ENCODE measurements at regions of chr3 and their contacts with region 1.

Region 1: DNA sequence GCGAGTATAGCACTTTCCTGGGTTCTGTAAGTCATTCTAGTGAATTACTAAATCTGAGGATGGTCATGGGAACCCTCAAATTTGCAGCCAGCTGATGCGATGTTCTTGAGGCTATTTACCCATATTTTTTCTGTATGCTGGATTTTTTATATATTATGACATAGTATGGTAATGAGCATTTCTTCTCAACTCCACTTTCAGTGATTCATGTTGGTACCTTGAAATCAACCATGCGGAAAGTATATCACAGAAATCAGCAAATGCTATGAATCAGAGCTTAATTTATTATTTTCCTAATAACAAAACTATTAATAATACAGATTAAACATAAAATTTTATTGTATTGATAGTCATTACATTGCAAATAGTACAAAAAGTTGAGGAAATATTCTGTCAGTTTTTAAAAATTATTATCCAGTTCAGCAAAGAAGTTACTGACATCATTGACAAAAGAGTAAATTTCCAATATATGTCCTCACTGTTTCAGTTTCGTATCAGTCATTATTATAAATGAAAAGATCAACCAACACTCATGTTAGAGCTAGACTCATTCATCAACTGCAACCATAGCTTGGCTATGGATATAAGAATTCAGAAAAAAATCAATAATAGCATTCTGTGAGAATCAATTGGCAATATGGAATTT is 164.3 kb upstream of the SETMAR start:
- DNase-seq: no peak
- H3K4me3 ChIP-seq: no peak overlapping the region
- H3K27ac ChIP-seq: no peak overlapping the region
- H3K4me1 ChIP-seq: no peaks in the 10 kb centered on the region
- H3K27me3 ChIP-seq: no peaks in the 10 kb centered on the region
- CTCF ChIP-seq: no peak

Region 2: GRCh38 chr3:2661078-2661477 is 1477.8 kb before region 1 on chr3:
- CTCF ChIA-PET with region 1: no interaction called
- POLR2A ChIA-PET with region 1: no interaction called
- intact Hi-C with region 1: no loop called
- DNase-seq: no peak
- H3K4me3 ChIP-seq: no peak overlapping the region
- H3K27ac ChIP-seq: no peak overlapping the region
- H3K4me1 ChIP-seq: no peaks in the 10 kb centered on the region
- H3K27me3 ChIP-seq: no peaks in the 10 kb centered on the region
- CTCF ChIP-seq: no peak

Region 3: GRCh38 chr3:4162096-4162495 is 23.2 kb after region 1 on chr3:
- CTCF ChIA-PET with region 1: no interaction called
- POLR2A ChIA-PET with region 1: no interaction called
- intact Hi-C with region 1: loop called (anchors 1 kb)
- DNase-seq: no peak
- H3K4me3 ChIP-seq: no peak overlapping the region
- H3K27ac ChIP-seq: no peak overlapping the region
- H3K4me1 ChIP-seq: no peaks in the 10 kb centered on the region
- H3K27me3 ChIP-seq: no peaks in the 10 kb centered on the region
- CTCF ChIP-seq: no peak